Dendritic cell treated with granulocyte-macrophage colony-stimulating factor and Interleukin-4, amounts not matched to agents 40 ng/mL and 50 ng/mL, for 4 days (primary cell): ENCODE measurements at regions of chr13 and their contacts with region 1.

Region 1: GRCh38 chr13:76773448-76774094 is 112.6 kb downstream of the KCTD12 start:
- H3K4me3 Mint-ChIP-seq: no peak overlapping the region
- H3K27ac Mint-ChIP-seq: no peak overlapping the region
- H3K4me1 Mint-ChIP-seq: peaks cover 14% of the 10 kb centered on the region
- H3K27me3 Mint-ChIP-seq: no peaks in the 10 kb centered on the region

Region 2: DNA sequence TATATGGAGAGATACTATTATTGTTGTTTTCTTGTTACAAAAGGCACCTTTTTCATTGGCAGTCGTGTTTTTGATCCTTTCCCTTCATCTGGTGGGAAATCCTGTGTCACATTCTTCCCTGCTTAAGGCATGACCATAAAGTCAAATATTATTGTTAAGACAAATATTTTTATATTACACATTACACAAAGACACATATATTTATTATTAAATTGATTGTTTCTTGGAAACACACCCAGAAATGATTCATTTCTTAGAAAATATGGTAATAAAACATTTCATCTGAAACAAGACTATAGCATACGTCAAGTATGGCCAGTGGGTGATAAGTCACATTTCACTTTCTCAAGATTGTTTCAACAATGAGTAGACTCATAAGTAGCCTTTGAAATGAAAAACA is 35.4 kb after region 1 on chr13:
- intact Hi-C with region 1: loop called (anchors 5 kb)
- H3K4me3 Mint-ChIP-seq: no peak overlapping the region
- H3K27ac Mint-ChIP-seq: no peak overlapping the region
- H3K4me1 Mint-ChIP-seq: peaks cover 35% of the 10 kb centered on the region
- H3K27me3 Mint-ChIP-seq: no peaks in the 10 kb centered on the region

Region 3: GRCh38 chr13:77429320-77430142 is 656.0 kb after region 1 on chr13:
- intact Hi-C with region 1: no loop called
- H3K4me3 Mint-ChIP-seq: no peak overlapping the region
- H3K27ac Mint-ChIP-seq: no peak overlapping the region
- H3K4me1 Mint-ChIP-seq: peaks cover 7% of the 10 kb centered on the region
- H3K27me3 Mint-ChIP-seq: no peaks in the 10 kb centered on the region